PC-3 (cell line): ENCODE measurements at regions of chr2 and their contacts with region 1.

Region 1: DNA sequence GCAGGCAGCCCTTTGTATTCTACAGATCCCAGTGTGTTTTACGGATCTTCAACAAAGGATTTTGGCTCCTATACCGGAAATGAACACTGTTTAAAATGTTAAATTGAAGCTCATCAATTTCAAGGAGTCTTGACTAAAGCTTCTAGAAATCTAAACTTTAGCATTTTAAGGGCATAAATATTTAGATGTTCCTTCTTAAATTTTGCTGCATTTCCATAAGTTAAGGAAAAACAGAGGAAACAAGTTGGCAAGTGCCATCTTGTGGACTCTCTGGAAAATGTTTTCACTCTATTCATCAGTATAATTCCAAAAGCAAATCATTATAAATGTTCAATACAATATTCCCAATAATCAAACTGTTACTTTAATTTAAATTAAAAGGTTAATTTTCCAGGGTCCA is 19.6 kb downstream of the CHN1 start:
- DNase-seq: peak; percentile 41
- ATAC-seq: peak; percentile 38; the same call in 1 of the 2 replicates
- H3K4me3 ChIP-seq: no peak overlapping the region
- H3K27ac ChIP-seq: no peak overlapping the region
- H3K4me1 ChIP-seq: no peaks in the 10 kb centered on the region
- H3K27me3 ChIP-seq: no peaks in the 10 kb centered on the region
- CTCF ChIP-seq: peak; percentile 85

Region 2: DNA sequence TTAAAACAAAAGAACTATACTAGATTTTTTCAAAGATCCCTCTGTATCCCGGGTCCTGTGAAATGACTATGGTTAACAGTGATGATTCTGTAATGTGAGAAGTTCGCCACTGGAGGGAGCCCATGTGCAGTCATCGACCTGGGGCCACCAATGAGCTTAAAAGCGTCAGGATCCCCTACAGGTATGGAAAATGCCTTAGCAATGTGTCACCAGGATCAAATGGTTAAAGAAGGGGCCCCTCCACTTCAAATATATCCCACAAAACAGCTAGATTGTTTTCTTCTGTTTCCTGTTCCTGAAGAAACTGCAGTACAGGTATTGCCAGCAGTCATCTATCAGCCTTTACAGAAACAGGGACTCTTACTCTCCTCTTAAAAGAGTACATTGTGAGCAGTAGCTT is 236.7 kb before region 1 on chr2:
- CTCF ChIA-PET with region 1: interaction called, 8 read pairs
- POLR2A ChIA-PET with region 1: no interaction called
- intact Hi-C with region 1: loop called (anchors 1 kb)
- DNase-seq: peak; percentile 91
- ATAC-seq: peak; percentile 80
- H3K4me3 ChIP-seq: no peak overlapping the region
- H3K27ac ChIP-seq: no peak overlapping the region
- H3K4me1 ChIP-seq: peaks cover 20% of the 10 kb centered on the region
- H3K27me3 ChIP-seq: no peaks in the 10 kb centered on the region
- CTCF ChIP-seq: peak; percentile 88

Region 3: DNA sequence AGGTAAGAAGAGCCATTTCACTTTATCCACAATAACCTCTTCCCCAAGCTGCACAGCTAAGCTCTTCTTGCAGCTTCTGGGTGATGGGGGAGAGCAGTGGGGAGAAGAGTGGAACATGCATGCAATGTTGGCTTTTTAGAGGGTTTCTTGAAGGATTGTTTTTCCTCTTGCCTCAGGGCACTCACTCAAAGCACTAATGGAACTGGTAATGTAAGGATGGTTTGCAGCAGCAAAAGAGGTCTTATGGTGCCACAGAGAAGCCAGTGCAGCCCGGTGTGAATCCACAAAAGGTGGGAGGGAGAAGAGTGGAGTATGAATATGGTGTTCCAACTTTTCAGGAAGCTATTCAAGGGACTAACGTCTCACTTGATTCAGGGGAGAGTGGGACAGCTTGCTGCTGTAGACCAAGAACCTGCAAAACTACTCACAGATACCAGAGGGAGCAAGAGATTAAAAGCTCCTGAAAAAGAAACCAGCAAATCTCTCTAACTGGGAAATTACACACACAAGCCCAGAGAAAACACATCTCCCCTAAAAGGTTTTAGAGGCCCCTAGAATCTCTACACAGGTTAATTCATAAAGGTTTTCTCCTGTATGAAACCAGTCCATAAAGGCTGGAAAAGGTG is 96.9 kb before region 1 on chr2:
- CTCF ChIA-PET with region 1: interaction called, 3 read pairs
- POLR2A ChIA-PET with region 1: no interaction called
- intact Hi-C with region 1: loop called (anchors 5 kb)
- DNase-seq: no peak
- ATAC-seq: no peak
- H3K4me3 ChIP-seq: no peak overlapping the region
- H3K27ac ChIP-seq: no peak overlapping the region
- H3K4me1 ChIP-seq: no peaks in the 10 kb centered on the region
- H3K27me3 ChIP-seq: no peaks in the 10 kb centered on the region
- CTCF ChIP-seq: no peak